Heart left ventricle (tissue), 16 donors: ENCODE measurements at regions of chr17 and their contacts with region 1.

Region 1: DNA sequence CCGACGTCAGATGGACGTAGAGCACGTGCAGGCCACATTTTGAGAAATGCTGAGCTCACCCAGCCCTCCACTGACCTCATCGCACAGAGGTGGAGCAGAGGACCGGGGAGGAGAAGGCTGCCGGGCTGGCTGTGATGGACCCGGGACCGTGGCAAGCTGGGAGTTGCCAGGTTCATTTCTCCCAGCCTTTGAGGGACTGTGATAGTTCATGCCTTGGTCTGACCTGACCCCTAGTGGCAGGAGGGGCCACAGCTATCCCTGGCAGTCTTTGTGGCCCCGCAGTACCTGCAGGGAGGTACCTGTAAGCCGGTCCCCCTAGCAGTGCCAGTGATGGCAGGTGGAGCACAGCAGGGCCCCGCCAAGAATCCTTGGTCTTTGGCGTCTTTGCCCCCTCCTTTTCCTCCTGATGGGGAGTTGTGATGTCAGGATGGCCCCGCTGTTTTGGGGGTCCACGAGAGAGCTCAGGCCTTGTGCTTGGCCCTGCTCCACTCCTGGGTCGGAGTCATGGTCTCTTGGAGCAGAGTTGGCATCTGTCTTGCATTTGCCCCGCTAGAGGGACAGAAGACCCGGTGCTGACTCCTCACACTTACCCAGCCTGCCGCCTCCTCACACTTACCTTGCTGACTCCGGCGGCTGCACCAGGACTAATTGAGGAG is 50.4 kb downstream of the OR1D5 start:
- DNase-seq: peak; percentile 61 to 72 (median 62)
- ATAC-seq: peak; percentile 76 to 90 (median 87)
- H3K4me3 ChIP-seq: no peak overlapping the region
- H3K27ac ChIP-seq: no peak overlapping the region
- H3K4me1 ChIP-seq: peaks cover 0 to 4% (median 0%) of the 10 kb centered on the region in 12 donors
- H3K27me3 ChIP-seq: no peaks in the 10 kb centered on the region
- CTCF ChIP-seq: peak; percentile 66 to 87 (median 82)
- POLR2A ChIP-seq: no peak

Region 2: DNA sequence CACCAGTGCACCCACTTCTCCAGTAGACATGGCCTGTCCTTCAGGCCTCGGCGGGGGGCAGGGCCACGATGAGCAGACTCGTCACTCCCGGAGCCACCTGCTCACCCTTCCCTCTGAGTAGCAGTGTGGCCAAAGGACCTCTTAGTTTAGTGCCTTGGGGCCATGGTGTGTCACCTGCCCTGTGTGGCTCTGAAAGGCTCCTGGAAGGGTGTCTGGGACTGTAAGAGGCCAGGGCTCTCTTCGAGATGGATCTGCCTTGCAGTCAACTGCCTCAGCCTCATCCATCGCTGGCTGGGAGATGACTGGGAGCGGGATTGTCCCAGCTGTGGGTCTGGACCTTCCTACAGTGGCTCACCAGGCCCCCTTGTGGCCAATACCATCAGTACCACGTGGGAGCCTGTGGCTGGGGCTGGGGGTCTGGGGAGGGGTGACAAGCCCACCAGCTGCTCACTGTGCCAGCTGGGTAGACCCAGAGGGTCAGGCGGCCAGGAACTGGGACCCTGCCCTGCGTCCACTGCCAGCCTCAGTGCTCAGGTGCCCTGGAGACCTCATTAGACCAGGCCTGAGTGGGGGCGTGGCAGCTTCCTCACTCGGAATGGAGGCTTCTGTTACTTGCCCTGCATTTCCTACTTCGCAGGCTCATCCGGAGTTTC is 83.0 kb before region 1 on chr17:
- intact Hi-C with region 1: loop called in 3 of 10 experiments (anchors 5 to 10 kb)
- DNase-seq: peak in 1 of 5 donors; percentile 39
- ATAC-seq: peak; percentile 56 to 79 (median 70)
- H3K4me3 ChIP-seq: no peak overlapping the region
- H3K27ac ChIP-seq: no peak overlapping the region
- H3K4me1 ChIP-seq: no peaks in the 10 kb centered on the region
- H3K27me3 ChIP-seq: no peaks in the 10 kb centered on the region
- CTCF ChIP-seq: peak; percentile 47 to 70 (median 60)
- POLR2A ChIP-seq: no peak

Region 3: DNA sequence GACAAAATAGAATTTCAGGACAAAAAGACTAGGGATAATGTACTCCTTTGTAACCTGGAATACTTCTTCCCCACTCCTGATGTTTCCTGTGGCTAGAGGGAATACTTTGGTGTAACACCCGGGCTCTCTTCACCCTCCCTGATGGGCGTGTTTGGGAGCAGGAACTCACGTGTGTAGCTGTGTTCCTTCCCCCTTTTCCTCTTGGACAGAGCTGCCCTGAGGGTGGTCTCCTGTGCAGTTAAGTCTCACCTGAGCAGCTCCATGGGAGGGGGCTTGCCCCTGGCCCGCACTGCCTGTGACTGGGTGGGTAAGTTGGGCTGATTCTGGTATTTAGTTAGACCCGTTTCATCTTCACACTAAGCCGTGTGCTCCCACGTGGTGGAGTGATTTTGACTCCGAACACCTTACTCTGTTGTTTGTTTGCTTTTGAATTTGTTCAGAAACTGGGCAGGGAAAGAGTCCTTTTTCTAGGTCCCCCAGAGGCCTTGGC is 37.5 kb before region 1 on chr17:
- intact Hi-C with region 1: no loop called
- DNase-seq: no peak
- ATAC-seq: no peak
- H3K4me3 ChIP-seq: peak overlapping the region in 5 of 12 donors; percentile 9 to 16 (median 14)
- H3K27ac ChIP-seq: peak overlapping the region in 1 of 12 donors; percentile 44
- H3K4me1 ChIP-seq: no peaks in the 10 kb centered on the region
- H3K27me3 ChIP-seq: no peaks in the 10 kb centered on the region
- CTCF ChIP-seq: no peak
- POLR2A ChIP-seq: no peak

Region 4: GRCh38 chr17:2990396-2990795 is 22.7 kb before region 1 on chr17:
- intact Hi-C with region 1: no loop called
- DNase-seq: peak in 1 of 5 donors; percentile 22
- ATAC-seq: peak in 2 of 4 donors; percentile 24 to 55
- H3K4me3 ChIP-seq: no peak overlapping the region
- H3K27ac ChIP-seq: no peak overlapping the region
- H3K4me1 ChIP-seq: no peaks in the 10 kb centered on the region
- H3K27me3 ChIP-seq: no peaks in the 10 kb centered on the region
- CTCF ChIP-seq: no peak
- POLR2A ChIP-seq: no peak

Region 5: DNA sequence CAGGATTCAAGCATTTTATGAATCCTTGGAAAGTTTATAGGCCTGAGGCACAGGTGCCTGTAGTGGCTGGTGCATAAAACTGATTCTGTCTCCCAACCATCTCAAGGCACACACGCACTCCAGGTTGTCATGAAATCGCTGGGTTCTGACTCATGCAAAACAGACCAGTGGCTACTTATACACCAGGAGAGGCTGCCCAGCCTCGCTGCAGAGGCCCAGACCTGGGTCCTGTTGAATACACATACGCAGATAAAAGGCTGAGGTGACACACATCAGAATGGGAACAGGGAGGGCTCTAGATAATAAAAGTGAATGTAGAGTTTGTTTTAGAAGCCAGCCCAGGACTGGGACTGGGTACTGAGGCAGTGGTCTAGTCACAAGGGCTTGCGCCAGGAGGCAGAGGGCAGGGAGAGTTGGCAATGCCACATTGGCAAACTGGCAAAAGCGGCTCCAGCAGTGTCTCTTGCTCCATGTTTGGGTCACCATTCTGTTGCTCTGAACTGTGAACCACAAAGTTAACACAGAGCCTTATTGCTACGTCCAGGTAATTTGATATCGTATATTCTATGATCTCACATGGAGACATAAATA is 36.7 kb after region 1 on chr17:
- intact Hi-C with region 1: no loop called
- DNase-seq: peak in 1 of 5 donors; percentile 14
- ATAC-seq: no peak
- H3K4me3 ChIP-seq: peak overlapping the region in 10 of 12 donors; percentile 39 to 87 (median 70)
- H3K27ac ChIP-seq: peak overlapping the region in 2 of 12 donors; percentile 79 to 80
- H3K4me1 ChIP-seq: peaks cover 0 to 14% (median 4%) of the 10 kb centered on the region in 12 donors
- H3K27me3 ChIP-seq: no peaks in the 10 kb centered on the region
- CTCF ChIP-seq: no peak
- POLR2A ChIP-seq: no peak